ENCODE measurements at regions of chr10 and their contacts with region 1.

Region 1: DNA sequence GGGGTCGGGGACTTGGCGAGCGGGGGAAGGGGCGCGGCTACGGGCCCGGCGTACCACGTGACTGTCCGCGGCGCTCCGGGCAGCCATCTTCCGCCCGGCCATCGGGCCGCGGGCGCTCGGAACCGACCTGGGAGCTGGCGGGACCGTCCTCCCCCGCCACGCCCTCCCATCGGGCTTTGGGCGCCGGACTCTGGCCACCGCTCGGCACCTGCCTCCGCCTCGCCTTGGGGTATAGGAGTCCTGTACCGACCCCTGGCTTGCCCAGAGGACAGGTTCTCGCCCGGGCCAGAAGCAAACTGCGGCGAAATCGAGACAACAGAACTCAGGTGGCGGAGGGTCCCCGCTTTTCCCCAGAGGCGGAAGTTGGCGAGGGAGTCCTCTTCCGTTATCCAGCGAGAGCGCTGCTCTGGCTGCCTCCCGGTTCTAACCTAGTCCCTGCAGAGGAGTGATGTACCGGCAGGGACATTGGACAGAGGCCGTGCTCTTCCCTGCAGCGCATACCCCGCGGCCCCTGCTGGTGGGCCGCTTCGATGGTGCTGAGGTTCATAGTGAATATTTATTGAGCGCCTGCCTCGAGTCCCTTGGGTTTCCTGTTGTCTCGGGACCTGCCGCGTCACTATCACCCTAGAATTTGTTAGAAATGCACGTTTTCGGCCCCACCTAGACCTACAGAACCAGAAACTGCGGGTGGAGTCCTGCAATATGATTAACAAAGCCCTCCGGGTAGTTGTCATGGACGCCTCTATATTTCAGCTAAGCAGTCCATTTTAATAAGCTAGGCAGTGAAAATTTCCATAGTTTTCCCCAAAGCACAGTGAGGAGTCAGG is 1.3 kb upstream of the SGMS1 start:
- DNase-seq: peak in 2 of 3 donors; percentile 64 to 87
- ATAC-seq: peak; percentile 85 to 86
- H3K4me3 ChIP-seq: peak overlapping the region; percentile 95
- H3K27ac ChIP-seq: peak overlapping the region; percentile 97
- H3K4me1 ChIP-seq: peaks cover 1% of the 10 kb centered on the region
- H3K27me3 ChIP-seq: no peaks in the 10 kb centered on the region

Region 2: GRCh38 chr10:50325449-50326171 is 299.5 kb before region 1 on chr10:
- intact Hi-C with region 1: loop called in 1 of 4 experiments (anchors 10 kb)
- DNase-seq: peak; percentile 63 to 88 (median 77)
- ATAC-seq: peak; percentile 84 to 85
- H3K4me3 ChIP-seq: peak overlapping the region; percentile 53
- H3K27ac ChIP-seq: peak overlapping the region; percentile 29
- H3K4me1 ChIP-seq: peaks cover 7% of the 10 kb centered on the region
- H3K27me3 ChIP-seq: no peaks in the 10 kb centered on the region

Region 3: DNA sequence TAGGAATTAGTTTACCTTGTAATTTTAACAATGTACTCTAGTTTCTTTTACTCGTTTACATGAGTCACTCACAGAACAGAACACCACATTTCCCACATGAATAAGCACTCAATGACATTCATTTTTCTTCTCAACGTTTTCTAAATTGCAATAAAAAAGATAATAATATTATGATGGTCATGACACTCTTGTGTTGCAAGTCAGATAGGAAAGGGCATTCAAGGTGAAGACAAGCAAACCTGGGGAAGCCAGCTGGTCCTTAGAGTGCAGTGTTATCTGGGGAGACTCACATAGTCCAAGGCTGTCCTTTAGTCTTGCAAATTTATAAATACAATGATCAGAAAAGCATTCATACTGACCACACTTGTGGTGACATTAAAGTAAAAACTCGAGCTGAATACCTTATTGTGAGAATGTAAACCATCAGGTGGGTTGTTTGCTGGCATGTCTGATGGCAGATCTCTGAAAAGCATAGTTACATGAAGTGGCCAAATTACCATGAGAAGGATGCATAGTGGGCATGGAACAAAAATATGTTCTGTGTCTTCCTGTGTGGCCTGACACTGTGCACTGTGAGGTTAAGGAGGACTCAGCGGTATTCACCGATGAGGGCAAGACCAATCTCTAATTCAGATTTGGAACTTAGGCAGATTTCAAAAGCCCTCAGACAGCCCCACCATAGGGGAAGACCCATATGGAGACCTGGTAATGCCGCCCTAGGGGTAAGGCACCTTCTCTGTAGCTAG is 214.8 kb before region 1 on chr10:
- intact Hi-C with region 1: loop called in 3 of 4 experiments (anchors 5 to 10 kb)
- DNase-seq: no peak
- ATAC-seq: no peak
- H3K4me3 ChIP-seq: no peak overlapping the region
- H3K27ac ChIP-seq: no peak overlapping the region
- H3K4me1 ChIP-seq: no peaks in the 10 kb centered on the region
- H3K27me3 ChIP-seq: no peaks in the 10 kb centered on the region

Region 4: GRCh38 chr10:50417886-50418830 is 206.9 kb before region 1 on chr10:
- intact Hi-C with region 1: loop called in 3 of 4 experiments (anchors 5 to 10 kb)
- DNase-seq: peak; percentile 87 to 92 (median 90)
- ATAC-seq: peak; percentile 95 to 98
- H3K4me3 ChIP-seq: peak overlapping the region; percentile 80
- H3K27ac ChIP-seq: peak overlapping the region; percentile 31
- H3K4me1 ChIP-seq: peaks cover 3% of the 10 kb centered on the region
- H3K27me3 ChIP-seq: no peaks in the 10 kb centered on the region

Region 5: GRCh38 chr10:50552771-50553535 is 72.1 kb before region 1 on chr10:
- intact Hi-C with region 1: loop called in 2 of 4 experiments (anchors 5 kb)
- DNase-seq: no peak
- ATAC-seq: no peak
- H3K4me3 ChIP-seq: no peak overlapping the region
- H3K27ac ChIP-seq: peak overlapping the region; percentile 70
- H3K4me1 ChIP-seq: peaks cover 17% of the 10 kb centered on the region
- H3K27me3 ChIP-seq: no peaks in the 10 kb centered on the region